Activated T-helper 2 cell treated with anti-CD3 and anti-CD28 coated beads, Interferon-gamma antibody, Interleukin-2, Interleukin-4, amounts not matched to agents 10 μg/mL and 5 μg/mL and 100 μg/mL, durations not matched to agents 14 hours and 24 hours and 36 hours (primary cell): ENCODE measurements at regions of chr18 and their contacts with region 1.

Region 1: DNA sequence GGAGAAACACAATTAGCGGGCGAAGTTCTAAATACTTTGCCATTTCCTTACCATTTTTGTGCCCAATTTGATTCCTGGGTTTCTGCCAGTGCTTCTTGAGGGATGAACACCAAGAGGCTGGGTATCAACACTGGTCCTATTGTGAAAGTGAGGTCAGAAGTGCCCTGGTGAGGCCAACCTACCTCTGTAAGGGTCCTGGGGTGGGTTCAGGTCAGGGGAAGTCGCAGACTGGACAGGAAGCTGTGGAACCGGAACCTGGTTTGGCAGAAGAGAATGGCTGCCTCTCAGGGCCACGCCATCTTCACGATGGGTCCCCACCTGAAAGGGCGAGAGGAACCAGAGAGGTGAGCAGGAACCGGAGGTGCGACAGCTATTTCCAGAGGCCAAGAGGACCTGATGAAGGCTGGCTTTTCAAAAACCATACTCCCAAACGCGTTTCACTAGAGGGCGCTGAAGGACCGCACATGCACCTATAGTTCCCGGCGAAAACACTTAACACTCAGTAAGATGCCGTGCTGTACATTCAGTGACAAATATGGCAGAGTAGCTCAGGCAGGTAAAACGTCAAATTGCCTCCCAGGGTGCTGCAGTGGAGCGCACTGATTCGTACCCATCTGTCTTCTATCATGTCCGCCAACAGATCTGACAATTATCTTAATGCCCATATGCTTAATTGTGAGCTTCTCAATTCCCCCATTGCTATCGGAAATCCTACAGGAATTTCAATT is 275.3 kb upstream of the CCDC68 start:
- DNase-seq: peak; percentile 57
- H3K4me3 Mint-ChIP-seq: no peak overlapping the region
- H3K27ac Mint-ChIP-seq: no peak overlapping the region
- H3K4me1 Mint-ChIP-seq: peaks cover 13% of the 10 kb centered on the region
- H3K27me3 Mint-ChIP-seq: no peaks in the 10 kb centered on the region

Region 2: DNA sequence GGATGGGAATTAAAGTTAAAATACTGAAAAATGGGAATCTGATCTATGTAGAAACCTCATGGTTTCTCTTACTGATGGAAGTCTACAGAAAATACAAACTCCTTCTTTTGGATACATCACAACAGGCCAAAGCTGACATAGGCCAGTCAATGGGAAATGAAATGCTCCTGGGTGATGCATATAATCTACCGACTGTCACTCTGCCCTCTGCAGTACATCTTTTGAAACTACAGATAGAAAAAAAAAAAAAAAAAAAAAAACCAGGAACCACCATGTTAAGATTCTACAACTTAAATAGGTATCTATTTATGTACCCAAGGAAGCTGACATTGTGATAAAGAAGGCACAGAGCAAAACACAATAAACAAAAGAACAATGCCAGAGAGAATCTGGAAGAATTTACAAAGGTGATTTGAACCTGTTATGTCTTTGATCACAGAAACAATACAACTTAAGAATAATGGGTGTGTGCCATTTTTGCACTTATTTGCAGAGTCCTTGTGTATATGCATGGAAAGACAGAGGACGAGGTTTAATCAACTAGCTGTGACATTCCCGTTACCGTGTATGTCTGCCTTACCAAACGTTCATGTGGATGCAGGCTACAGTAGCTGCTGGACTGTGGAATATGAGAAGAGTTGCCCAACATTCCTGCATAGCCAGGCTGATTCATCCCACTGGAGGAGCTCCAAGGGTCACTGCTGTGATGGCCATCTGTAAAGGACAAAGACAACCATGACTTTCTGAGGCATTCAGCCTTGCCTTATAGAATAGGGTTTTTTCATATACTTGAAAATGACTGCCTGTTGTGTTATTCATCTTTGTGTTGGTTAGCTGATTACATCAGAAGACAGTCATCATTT is 40.7 kb after region 1 on chr18:
- intact Hi-C with region 1: loop called (anchors 2 kb)
- DNase-seq: no peak
- H3K4me3 Mint-ChIP-seq: no peak overlapping the region
- H3K27ac Mint-ChIP-seq: no peak overlapping the region
- H3K4me1 Mint-ChIP-seq: peaks cover 9% of the 10 kb centered on the region
- H3K27me3 Mint-ChIP-seq: no peaks in the 10 kb centered on the region

Region 3: DNA sequence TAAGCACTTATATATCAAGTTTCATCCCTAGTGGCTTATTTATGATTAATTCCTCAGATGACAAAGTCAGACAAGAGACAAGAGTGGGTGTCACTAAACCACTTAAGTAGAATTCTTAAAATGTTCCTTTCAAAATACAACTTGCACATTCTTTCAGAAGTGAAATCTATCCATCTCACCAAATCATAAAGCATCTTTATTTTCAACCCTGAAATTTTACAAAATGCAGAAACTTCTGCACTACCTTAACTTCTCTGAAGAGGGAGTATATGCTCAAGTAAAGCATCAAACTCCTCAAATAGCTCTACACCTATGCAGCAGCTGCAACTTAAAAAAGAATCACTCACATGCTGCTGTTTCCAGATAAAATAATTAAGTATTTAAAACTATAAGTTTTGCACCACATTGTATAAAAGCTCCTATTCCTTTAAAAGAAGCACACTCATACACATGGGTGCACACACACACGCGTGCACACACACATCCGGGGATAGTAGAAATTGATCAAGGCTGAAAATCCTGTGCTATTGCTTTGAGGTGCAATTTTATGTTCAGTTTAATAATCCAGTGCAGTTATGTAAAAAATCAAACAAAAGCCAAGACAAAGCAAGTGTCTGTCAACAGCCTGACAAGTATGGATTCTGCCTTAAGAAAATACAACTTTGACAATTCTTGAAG is 109.0 kb after region 1 on chr18:
- intact Hi-C with region 1: loop called (anchors 5 kb)
- DNase-seq: no peak
- H3K4me3 Mint-ChIP-seq: no peak overlapping the region
- H3K27ac Mint-ChIP-seq: no peak overlapping the region
- H3K4me1 Mint-ChIP-seq: peaks cover 4% of the 10 kb centered on the region
- H3K27me3 Mint-ChIP-seq: peaks cover 7% of the 10 kb centered on the region

Region 4: GRCh38 chr18:55589625-55590291 is 355.2 kb after region 1 on chr18:
- intact Hi-C with region 1: loop called (anchors 2 kb)
- DNase-seq: peak; percentile 84
- H3K4me3 Mint-ChIP-seq: peak overlapping the region; percentile 92
- H3K27ac Mint-ChIP-seq: peak overlapping the region; percentile 68
- H3K4me1 Mint-ChIP-seq: peaks cover 21% of the 10 kb centered on the region
- H3K27me3 Mint-ChIP-seq: peaks cover 24% of the 10 kb centered on the region